Endothelial cell of umbilical vein (primary cell): ENCODE measurements at regions of chr7 and their contacts with region 1.

Region 1: DNA sequence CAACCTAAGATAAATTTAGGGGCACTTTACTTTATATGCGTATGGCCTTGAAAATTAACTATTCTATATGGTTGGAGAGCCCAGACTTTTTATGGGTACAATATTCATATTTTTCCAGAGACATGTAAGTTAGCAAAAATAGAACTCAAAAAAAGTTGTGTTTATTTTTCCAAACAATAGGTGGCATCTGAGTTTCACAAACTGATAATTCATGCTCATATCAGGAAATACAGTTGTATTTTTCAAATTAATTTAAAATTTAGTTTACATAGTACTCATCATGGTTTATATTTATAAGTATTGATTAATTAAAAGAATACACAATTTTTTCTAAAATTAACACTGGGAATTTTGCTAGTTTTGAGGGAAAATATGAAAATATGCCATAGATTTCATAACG is 34.6 kb downstream of the ANKRD7 start:
- DNase-seq: peak; percentile 5
- H3K4me3 ChIP-seq: no peak overlapping the region
- H3K27ac ChIP-seq: no peak overlapping the region
- H3K4me1 ChIP-seq: no peaks in the 10 kb centered on the region
- H3K27me3 ChIP-seq: no peaks in the 10 kb centered on the region
- CTCF ChIP-seq: no peak
- POLR2A ChIP-seq: no peak

Region 2: GRCh38 chr7:118232837-118233236 is 26.3 kb before region 1 on chr7:
- CTCF ChIA-PET with region 1: no interaction called
- POLR2A ChIA-PET with region 1: no interaction called
- dilution Hi-C with region 1: no loop called
- intact Hi-C with region 1: no loop called
- DNase-seq: no peak
- H3K4me3 ChIP-seq: no peak overlapping the region
- H3K27ac ChIP-seq: no peak overlapping the region
- H3K4me1 ChIP-seq: no peaks in the 10 kb centered on the region
- H3K27me3 ChIP-seq: no peaks in the 10 kb centered on the region
- CTCF ChIP-seq: no peak
- POLR2A ChIP-seq: no peak

Region 3: DNA sequence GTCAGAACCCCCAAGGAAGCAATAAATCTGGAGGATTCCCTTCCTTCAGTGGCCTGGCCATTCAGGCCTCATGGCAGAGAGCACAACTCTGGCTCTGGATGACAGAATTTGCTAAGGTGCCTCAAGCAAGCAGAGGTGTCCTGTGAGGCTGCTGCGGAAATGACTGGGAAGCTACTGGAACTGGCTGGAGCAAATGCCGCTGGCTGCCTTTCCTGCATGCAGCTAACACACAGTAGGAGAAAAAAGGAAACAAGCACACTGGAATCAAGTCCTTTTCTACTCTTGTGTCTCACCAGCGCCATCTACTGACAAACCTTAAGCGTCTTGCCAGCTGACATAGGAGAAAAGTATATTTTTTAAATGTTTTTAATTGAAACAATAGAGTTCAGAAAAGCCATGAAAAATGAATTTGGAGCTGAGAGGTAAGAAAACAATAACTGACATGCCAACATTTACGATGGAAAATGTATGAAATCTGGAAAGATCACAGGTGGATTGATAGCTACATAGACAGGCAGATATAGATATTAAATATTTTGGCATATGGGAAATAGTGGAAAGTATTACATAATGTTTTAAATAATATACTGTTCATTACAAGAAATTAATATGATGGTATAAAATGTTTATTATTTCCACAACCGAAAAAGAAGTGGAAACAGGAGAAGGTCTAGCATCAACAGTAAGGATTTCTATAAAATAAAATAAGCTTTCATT is 917.0 kb after region 1 on chr7:
- CTCF ChIA-PET with region 1: no interaction called
- POLR2A ChIA-PET with region 1: no interaction called
- dilution Hi-C with region 1: no loop called
- intact Hi-C with region 1: loop called (anchors 5 kb)
- DNase-seq: peak; percentile 34
- H3K4me3 ChIP-seq: no peak overlapping the region
- H3K27ac ChIP-seq: no peak overlapping the region
- H3K4me1 ChIP-seq: no peaks in the 10 kb centered on the region
- H3K27me3 ChIP-seq: no peaks in the 10 kb centered on the region
- CTCF ChIP-seq: peak; percentile 57 to 65
- POLR2A ChIP-seq: no peak